Activated naive CD4-positive, alpha-beta T cell treated with anti-CD3 and anti-CD28 coated beads for 36 hours (primary cell): ENCODE measurements at regions of chr1 and their contacts with region 1.

Region 1: GRCh38 chr1:185636848-185637247 is 97.3 kb upstream of the HMCN1 start:
- DNase-seq: peak; percentile 55
- H3K4me3 Mint-ChIP-seq: no peak overlapping the region
- H3K27ac Mint-ChIP-seq: peak overlapping the region; percentile 40
- H3K4me1 Mint-ChIP-seq: peaks cover 12% of the 10 kb centered on the region
- H3K27me3 Mint-ChIP-seq: peaks cover 6% of the 10 kb centered on the region

Region 2: GRCh38 chr1:184838489-184838951 is 798.3 kb before region 1 on chr1:
- CTCF ChIA-PET with region 1: no interaction called
- intact Hi-C with region 1: no loop called
- DNase-seq: no peak
- H3K4me3 Mint-ChIP-seq: no peak overlapping the region
- H3K27ac Mint-ChIP-seq: no peak overlapping the region
- H3K4me1 Mint-ChIP-seq: no peaks in the 10 kb centered on the region
- H3K27me3 Mint-ChIP-seq: peaks cover 4% of the 10 kb centered on the region

Region 3: DNA sequence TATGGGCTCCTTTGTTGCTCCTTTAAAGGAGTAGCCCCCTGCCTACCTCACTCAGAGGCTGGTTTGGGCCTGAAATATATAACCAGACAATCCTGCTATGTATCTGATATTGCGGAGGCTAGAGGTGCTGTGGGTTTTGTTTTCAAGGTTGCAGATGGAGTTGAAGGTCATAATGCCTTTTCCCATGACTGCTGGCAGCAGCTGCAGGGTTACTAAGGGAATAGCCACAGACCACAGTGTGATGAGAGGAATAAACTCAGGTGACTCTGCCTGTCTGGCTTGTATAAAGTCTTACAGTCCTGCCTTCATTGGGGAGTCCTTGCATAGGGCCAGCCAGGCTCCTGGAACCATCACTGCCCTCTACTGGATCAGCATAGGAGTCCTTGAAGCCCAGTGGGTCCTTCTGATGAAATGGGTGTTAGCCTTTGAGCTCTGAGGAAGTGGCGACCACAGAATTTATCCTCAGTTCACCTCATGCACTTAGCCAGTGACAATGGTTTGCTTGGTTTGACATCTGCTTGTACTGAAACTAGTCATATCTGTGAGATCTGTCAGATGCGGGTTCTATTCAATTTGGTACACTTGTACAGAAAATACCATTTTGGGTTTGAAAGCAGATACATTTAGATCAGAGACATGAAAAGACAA is 77.0 kb before region 1 on chr1:
- CTCF ChIA-PET with region 1: no interaction called
- intact Hi-C with region 1: loop called (anchors 2 kb)
- DNase-seq: peak; percentile 58
- H3K4me3 Mint-ChIP-seq: no peak overlapping the region
- H3K27ac Mint-ChIP-seq: no peak overlapping the region
- H3K4me1 Mint-ChIP-seq: peaks cover 43% of the 10 kb centered on the region
- H3K27me3 Mint-ChIP-seq: no peaks in the 10 kb centered on the region

Region 4: DNA sequence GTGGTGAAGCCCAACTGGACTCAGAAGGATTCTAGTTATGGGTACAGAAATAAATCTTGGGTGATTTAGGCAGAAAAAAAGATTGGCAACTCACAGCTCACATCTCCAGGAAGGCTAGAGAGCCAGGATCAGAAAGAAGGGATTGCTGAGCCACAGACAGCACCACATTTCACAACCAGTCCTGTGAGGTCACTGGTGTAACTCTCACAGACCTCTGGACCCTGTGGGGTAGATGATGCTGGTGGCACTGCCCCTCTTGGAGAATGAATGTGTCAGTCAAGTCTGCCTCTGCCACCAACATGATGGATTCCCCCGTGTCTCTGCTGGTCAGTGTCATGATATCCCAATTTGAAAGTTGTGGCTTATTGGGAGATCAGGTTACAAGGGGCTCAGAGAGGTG is 26.5 kb after region 1 on chr1:
- CTCF ChIA-PET with region 1: no interaction called
- intact Hi-C with region 1: loop called (anchors 2 kb)
- DNase-seq: no peak
- H3K4me3 Mint-ChIP-seq: no peak overlapping the region
- H3K27ac Mint-ChIP-seq: no peak overlapping the region
- H3K4me1 Mint-ChIP-seq: peaks cover 3% of the 10 kb centered on the region
- H3K27me3 Mint-ChIP-seq: no peaks in the 10 kb centered on the region